SK-N-SH (cell line): ENCODE measurements at regions of chr7 and their contacts with region 1.

Region 1: DNA sequence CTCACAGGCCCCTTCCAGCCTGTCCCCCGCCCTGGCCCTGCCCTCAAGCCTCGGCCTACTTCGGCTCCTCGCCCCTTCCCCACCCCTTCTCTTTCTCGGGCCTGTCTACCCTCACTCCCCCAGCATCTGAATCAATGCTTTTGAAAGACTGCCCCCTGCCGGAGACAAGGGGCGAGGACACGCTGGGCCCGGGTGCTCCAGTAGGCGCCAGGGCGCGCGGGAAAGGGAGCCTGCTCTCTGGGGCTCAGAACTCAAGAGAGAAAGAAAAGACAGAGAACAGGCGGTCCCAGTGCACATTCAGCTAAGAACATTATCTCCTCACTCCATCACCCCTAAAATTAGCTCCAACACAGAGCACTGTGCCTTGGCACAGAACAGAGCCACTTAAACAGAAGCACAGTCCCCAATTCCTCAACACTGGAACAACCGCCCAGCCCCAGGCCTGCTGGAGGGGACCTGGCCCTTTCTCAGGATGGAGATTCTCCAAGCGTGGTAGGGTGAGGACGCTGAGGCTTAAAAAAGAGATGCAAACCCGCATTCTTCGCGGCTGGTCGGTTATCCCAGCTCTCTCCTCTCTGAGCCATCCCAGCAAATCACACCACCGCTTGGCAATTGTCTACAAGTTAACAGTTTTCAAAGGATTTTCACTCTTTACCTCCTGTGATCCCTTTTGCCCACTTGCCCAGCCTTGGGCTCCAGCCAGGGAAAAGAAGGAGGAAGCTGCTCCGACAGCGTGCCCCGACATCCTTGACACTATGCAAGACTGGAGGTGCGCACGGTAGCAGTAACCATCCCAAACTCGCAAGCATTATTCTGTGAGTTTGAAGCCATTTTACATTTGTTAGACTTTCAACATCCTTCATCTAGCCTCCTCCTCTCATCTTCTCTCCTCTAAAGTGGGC is 2.1 kb downstream of the GIGYF1 start:
- DNase-seq: peak; percentile 98
- H3K4me3 ChIP-seq: peak overlapping the region; percentile 66 to 87
- H3K27ac ChIP-seq: peak overlapping the region in 1 of 2 experiments; percentile 43; a peak in 2 of 4 replicates
- H3K4me1 ChIP-seq: peaks cover 18 to 23% of the 10 kb centered on the region in 2 experiments
- H3K27me3 ChIP-seq: no peaks in the 10 kb centered on the region
- CTCF ChIP-seq: peak; percentile 98
- EP300 ChIP-seq: no peak
- RAD21 ChIP-seq: peak; percentile 89

Region 2: GRCh38 chr7:100469227-100470044 is 222.5 kb before region 1 on chr7:
- CTCF ChIA-PET with region 1: interaction called, 22 read pairs
- POLR2A ChIA-PET with region 1: no interaction called
- DNase-seq: peak; percentile 98
- H3K4me3 ChIP-seq: no peak overlapping the region; a peak in 1 of 4 replicates
- H3K27ac ChIP-seq: no peak overlapping the region; a peak in 1 of 4 replicates
- H3K4me1 ChIP-seq: peaks cover 3 to 15% of the 10 kb centered on the region in 2 experiments; a peak in 3 of 4 replicates
- H3K27me3 ChIP-seq: no peaks in the 10 kb centered on the region
- CTCF ChIP-seq: peak; percentile 98
- EP300 ChIP-seq: no peak
- RAD21 ChIP-seq: peak; percentile 97

Region 3: GRCh38 chr7:100586266-100587025 is 105.5 kb before region 1 on chr7 and contains the start of gene FBXO24:
- CTCF ChIA-PET with region 1: interaction called, 25 read pairs
- POLR2A ChIA-PET with region 1: no interaction called
- DNase-seq: peak; percentile 100
- H3K4me3 ChIP-seq: peak within 1 kb of the TSS; percentile 83 to 92
- H3K27ac ChIP-seq: peak within 1 kb of the TSS; percentile 77 to 94
- H3K4me1 ChIP-seq: peaks cover 6 to 15% of the 10 kb centered on the region in 2 experiments; a peak in 2 of 4 replicates
- H3K27me3 ChIP-seq: no peaks in the 10 kb centered on the region
- CTCF ChIP-seq: no peak
- EP300 ChIP-seq: no peak; a peak in 1 of 4 replicates
- RAD21 ChIP-seq: no peak
- polyA plus RNA-seq, gene FBXO24: 0.71 and 0.94 TPM in 2 replicates

Region 4: GRCh38 chr7:100626530-100627237 is 65.2 kb before region 1 on chr7:
- CTCF ChIA-PET with region 1: interaction called, 101 read pairs
- POLR2A ChIA-PET with region 1: no interaction called
- DNase-seq: peak; percentile 100
- H3K4me3 ChIP-seq: peak overlapping the region; percentile 36 to 58
- H3K27ac ChIP-seq: peak overlapping the region in 1 of 2 experiments; percentile 20; a peak in 1 of 4 replicates
- H3K4me1 ChIP-seq: peaks cover 0 to 10% of the 10 kb centered on the region in 2 experiments; a peak in 1 of 4 replicates
- H3K27me3 ChIP-seq: no peaks in the 10 kb centered on the region
- CTCF ChIP-seq: no peak
- EP300 ChIP-seq: no peak
- RAD21 ChIP-seq: no peak

Region 5: DNA sequence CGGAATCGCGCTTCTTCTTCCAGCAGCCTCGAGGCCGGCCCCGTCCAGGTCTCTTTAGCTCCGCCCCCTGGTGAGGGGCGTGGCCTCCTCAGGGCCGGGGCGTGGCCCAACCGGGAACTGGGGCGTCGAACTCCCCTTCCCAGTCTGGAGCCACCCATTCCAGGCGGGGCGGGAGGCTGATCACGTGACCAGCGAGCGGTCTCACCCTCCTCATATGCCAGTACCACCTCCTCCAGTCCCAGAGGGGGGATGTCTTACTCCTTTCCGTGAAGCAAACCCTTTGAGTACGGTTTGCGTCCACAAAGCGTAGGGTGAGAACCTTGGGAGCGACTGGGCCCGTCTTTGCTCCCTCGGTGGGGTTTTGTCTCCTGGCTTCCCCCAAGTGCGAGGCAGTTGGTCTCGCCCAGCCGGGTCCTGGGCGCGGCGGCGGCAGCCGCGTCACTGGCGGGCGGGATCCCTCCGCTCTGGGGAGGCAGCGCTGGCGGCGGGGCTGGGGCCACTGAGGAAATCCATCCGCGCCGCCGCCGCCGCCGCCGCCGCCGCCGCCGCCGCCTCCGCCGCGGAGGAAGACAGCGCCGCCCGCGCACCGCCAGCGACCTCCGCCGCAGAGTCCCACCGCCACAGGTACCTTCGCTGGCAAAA is 18.5 kb before region 1 on chr7 and contains the start of gene GNB2:
- CTCF ChIA-PET with region 1: interaction called, 227 read pairs
- POLR2A ChIA-PET with region 1: interaction called, 14 read pairs
- DNase-seq: peak; percentile 99
- H3K4me3 ChIP-seq: peak within 1 kb of the TSS; percentile 83 to 98
- H3K27ac ChIP-seq: peak within 1 kb of the TSS; percentile 94 to 99
- H3K4me1 ChIP-seq: peaks cover 0 to 19% of the 10 kb centered on the region in 2 experiments; a peak in 1 of 4 replicates
- H3K27me3 ChIP-seq: no peaks in the 10 kb centered on the region
- CTCF ChIP-seq: no peak
- EP300 ChIP-seq: peak in 1 of 2 experiments; percentile 84; a peak in 2 of 4 replicates
- RAD21 ChIP-seq: no peak
- polyA plus RNA-seq, gene GNB2: 276 and 398 TPM in 2 replicates

Region 6: GRCh38 chr7:100719523-100720319 is 27.8 kb after region 1 on chr7:
- CTCF ChIA-PET with region 1: interaction called, 24 read pairs
- POLR2A ChIA-PET with region 1: no interaction called
- DNase-seq: no peak
- H3K4me3 ChIP-seq: 0 out of 4 replicates have a peak overlapping the region, but pooled peaks of 1 of the 2 experiments have one; percentile 29
- H3K27ac ChIP-seq: no peak overlapping the region
- H3K4me1 ChIP-seq: peaks cover 0 to 3% of the 10 kb centered on the region in 2 experiments; a peak in 1 of 4 replicates
- H3K27me3 ChIP-seq: peaks cover 28% of the 10 kb centered on the region
- CTCF ChIP-seq: peak; percentile 47
- EP300 ChIP-seq: no peak
- RAD21 ChIP-seq: peak; percentile 56

Region 7: DNA sequence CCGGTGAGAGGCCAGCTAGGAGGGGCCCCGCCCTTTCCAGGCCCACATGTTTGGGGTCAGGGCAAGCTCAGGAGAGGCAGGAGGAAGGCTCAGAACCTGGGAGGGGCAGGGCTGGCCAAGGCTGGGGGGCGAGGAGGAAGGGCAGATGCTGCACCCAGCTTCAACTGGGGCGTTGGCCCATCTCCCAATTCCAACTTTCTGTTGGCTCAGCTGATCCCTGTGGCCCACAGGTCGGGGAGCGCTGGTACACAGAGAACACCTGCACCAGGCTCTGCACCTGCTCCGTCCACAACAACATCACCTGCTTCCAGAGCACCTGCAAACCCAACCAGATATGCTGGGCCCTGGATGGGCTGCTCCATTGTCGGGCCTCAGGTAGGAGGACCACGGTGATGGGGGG is 81.6 kb after region 1 on chr7:
- CTCF ChIA-PET with region 1: no interaction called
- POLR2A ChIA-PET with region 1: no interaction called
- DNase-seq: no peak
- H3K4me3 ChIP-seq: no peak overlapping the region
- H3K27ac ChIP-seq: no peak overlapping the region
- H3K4me1 ChIP-seq: no peaks in the 10 kb centered on the region
- H3K27me3 ChIP-seq: peaks cover 76% of the 10 kb centered on the region
- CTCF ChIP-seq: no peak
- EP300 ChIP-seq: no peak
- RAD21 ChIP-seq: no peak

Region 8: GRCh38 chr7:100901921-100902332 is 210.0 kb after region 1 on chr7:
- CTCF ChIA-PET with region 1: no interaction called
- POLR2A ChIA-PET with region 1: no interaction called
- DNase-seq: no peak
- H3K4me3 ChIP-seq: no peak overlapping the region
- H3K27ac ChIP-seq: no peak overlapping the region
- H3K4me1 ChIP-seq: peaks cover 0 to 2% of the 10 kb centered on the region in 2 experiments; a peak in 1 of 4 replicates
- H3K27me3 ChIP-seq: peaks cover 61% of the 10 kb centered on the region
- CTCF ChIP-seq: no peak
- EP300 ChIP-seq: no peak
- RAD21 ChIP-seq: no peak